PC-3 (cell line): ENCODE measurements at regions of chr1 and their contacts with region 1.

Region 1: DNA sequence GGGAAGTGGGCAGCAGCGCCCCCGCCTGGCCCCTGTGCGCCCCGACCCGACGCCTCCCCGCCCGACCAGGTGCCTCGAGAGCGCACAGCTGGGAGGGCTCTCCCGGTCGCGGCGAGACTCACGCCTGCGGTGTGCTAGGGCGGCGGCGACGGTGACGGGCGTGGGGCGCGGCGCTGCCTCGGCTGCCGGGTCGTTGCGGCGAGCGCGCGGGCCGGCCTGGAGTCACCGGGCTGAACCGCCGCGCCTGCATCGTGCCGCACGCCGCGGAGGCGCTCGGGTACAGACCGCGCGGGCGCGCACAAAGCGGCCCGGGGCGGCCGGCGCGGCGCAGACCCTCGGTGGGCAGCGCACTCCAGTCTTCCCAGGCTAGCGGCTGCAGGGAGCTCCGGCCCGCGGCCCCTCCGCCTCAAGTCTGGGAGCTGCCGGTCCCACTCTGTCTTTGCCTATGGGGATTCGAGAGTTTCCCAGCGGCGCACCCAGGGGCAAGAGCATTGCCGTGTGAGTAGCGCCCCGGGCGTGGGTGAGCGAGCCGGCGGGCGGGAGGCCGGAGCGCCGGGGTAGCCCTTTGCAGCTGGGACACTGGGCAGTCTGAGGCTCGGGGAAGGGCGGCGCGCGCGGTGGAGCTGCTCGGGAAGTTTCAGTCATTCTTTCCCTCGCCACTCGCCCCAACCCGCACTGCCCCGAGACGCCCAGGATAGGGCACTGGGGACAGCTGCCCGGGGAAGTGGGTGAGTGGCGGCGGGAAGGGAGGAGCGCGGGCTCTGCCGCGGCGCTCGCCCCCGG is at the start of gene SLC35F3:
- DNase-seq: peak; percentile 93
- ATAC-seq: peak; percentile 78
- H3K4me3 ChIP-seq: peak within 1 kb of the TSS; percentile 72
- H3K27ac ChIP-seq: peak within 1 kb of the TSS; percentile 85
- H3K4me1 ChIP-seq: peaks cover 39% of the 10 kb centered on the region
- H3K27me3 ChIP-seq: no peaks in the 10 kb centered on the region
- CTCF ChIP-seq: peak; percentile 72
- total RNA-seq, gene SLC35F3: 17.7 and 19.3 TPM in 2 replicates

Region 2: GRCh38 chr1:233304489-233305102 is 600.2 kb before region 1 on chr1:
- CTCF ChIA-PET with region 1: no interaction called
- POLR2A ChIA-PET with region 1: no interaction called
- intact Hi-C with region 1: loop called (anchors 5 kb)
- DNase-seq: peak; percentile 74
- ATAC-seq: peak; percentile 71
- H3K4me3 ChIP-seq: no peak overlapping the region
- H3K27ac ChIP-seq: no peak overlapping the region
- H3K4me1 ChIP-seq: peaks cover 1% of the 10 kb centered on the region; the same call in 1 of the 2 replicates
- H3K27me3 ChIP-seq: no peaks in the 10 kb centered on the region
- CTCF ChIP-seq: peak; percentile 93

Region 3: DNA sequence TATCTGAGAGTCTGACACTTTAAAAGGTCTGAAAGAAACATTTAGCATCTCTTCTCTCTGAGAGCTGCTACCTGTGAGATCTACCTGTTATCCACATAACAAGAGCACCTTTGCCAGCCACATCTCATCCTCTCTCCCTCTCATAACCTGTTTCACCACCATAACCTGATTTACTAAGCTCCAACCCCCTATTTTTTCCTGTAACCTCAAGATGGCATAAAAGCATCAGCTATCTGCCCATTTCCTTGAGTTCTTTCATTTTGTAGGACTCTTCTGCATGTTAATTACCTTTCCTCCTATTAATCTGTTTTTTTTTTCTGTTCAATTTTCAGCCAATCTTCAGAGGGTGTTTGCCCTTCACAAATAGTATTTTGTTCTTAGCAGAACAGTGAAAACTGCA is 427.5 kb before region 1 on chr1:
- CTCF ChIA-PET with region 1: interaction called, 3 read pairs
- POLR2A ChIA-PET with region 1: no interaction called
- intact Hi-C with region 1: loop called (anchors 1 kb)
- DNase-seq: peak; percentile 41
- ATAC-seq: no peak
- H3K4me3 ChIP-seq: no peak overlapping the region
- H3K27ac ChIP-seq: no peak overlapping the region
- H3K4me1 ChIP-seq: peaks cover 18% of the 10 kb centered on the region
- H3K27me3 ChIP-seq: no peaks in the 10 kb centered on the region
- CTCF ChIP-seq: 0 out of 2 replicates have a peak, but pooled peaks have one; percentile 33

Region 4: DNA sequence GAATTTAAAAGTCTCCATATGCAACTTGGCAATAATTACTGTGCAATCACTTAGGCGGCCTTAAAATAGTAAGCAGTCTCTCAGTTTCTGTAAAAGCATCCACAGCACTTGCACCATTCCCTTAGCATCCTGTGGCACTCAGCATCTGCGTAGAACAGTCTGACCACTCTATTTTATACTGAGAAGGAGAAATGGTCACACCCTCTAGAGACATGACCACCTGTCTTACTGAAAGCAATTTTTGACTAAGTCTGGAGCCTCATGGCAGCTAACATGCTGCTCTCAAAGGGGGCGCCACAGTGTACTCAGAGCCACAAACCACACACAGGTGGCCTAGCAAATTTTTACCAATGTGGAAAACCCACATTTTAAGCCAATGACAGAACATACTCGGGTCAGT is 228.9 kb before region 1 on chr1:
- CTCF ChIA-PET with region 1: no interaction called
- POLR2A ChIA-PET with region 1: no interaction called
- intact Hi-C with region 1: loop called (anchors 5 kb)
- DNase-seq: no peak
- ATAC-seq: no peak
- H3K4me3 ChIP-seq: no peak overlapping the region
- H3K27ac ChIP-seq: no peak overlapping the region
- H3K4me1 ChIP-seq: peaks cover 19% of the 10 kb centered on the region
- H3K27me3 ChIP-seq: no peaks in the 10 kb centered on the region
- CTCF ChIP-seq: peak; percentile 54

Region 5: GRCh38 chr1:233759605-233760004 is 145.2 kb before region 1 on chr1:
- CTCF ChIA-PET with region 1: no interaction called
- POLR2A ChIA-PET with region 1: no interaction called
- intact Hi-C with region 1: no loop called
- DNase-seq: peak; percentile 58
- ATAC-seq: peak; percentile 53; the same call in 1 of the 2 replicates
- H3K4me3 ChIP-seq: no peak overlapping the region
- H3K27ac ChIP-seq: no peak overlapping the region
- H3K4me1 ChIP-seq: no peaks in the 10 kb centered on the region
- H3K27me3 ChIP-seq: 0 out of 2 replicates have a peak, but pooled peaks cover 3% of the 10 kb centered on the region
- CTCF ChIP-seq: no peak

Region 6: GRCh38 chr1:233960386-233960785 is 55.6 kb after region 1 on chr1:
- CTCF ChIA-PET with region 1: no interaction called
- POLR2A ChIA-PET with region 1: no interaction called
- intact Hi-C with region 1: no loop called
- DNase-seq: no peak
- ATAC-seq: no peak
- H3K4me3 ChIP-seq: no peak overlapping the region
- H3K27ac ChIP-seq: no peak overlapping the region
- H3K4me1 ChIP-seq: 0 out of 2 replicates have a peak, but pooled peaks cover 4% of the 10 kb centered on the region
- H3K27me3 ChIP-seq: no peaks in the 10 kb centered on the region
- CTCF ChIP-seq: no peak

Region 7: GRCh38 chr1:234047123-234047522 is 142.3 kb after region 1 on chr1:
- CTCF ChIA-PET with region 1: no interaction called
- POLR2A ChIA-PET with region 1: interaction called, 3 read pairs
- intact Hi-C with region 1: loop called (anchors 5 kb)
- DNase-seq: peak; percentile 97
- ATAC-seq: peak; percentile 97
- H3K4me3 ChIP-seq: no peak overlapping the region
- H3K27ac ChIP-seq: peak overlapping the region; percentile 97
- H3K4me1 ChIP-seq: peaks cover 33% of the 10 kb centered on the region
- H3K27me3 ChIP-seq: no peaks in the 10 kb centered on the region
- CTCF ChIP-seq: no peak